ENCODE measurements at regions of chr14 and their contacts with region 1.

Region 1: DNA sequence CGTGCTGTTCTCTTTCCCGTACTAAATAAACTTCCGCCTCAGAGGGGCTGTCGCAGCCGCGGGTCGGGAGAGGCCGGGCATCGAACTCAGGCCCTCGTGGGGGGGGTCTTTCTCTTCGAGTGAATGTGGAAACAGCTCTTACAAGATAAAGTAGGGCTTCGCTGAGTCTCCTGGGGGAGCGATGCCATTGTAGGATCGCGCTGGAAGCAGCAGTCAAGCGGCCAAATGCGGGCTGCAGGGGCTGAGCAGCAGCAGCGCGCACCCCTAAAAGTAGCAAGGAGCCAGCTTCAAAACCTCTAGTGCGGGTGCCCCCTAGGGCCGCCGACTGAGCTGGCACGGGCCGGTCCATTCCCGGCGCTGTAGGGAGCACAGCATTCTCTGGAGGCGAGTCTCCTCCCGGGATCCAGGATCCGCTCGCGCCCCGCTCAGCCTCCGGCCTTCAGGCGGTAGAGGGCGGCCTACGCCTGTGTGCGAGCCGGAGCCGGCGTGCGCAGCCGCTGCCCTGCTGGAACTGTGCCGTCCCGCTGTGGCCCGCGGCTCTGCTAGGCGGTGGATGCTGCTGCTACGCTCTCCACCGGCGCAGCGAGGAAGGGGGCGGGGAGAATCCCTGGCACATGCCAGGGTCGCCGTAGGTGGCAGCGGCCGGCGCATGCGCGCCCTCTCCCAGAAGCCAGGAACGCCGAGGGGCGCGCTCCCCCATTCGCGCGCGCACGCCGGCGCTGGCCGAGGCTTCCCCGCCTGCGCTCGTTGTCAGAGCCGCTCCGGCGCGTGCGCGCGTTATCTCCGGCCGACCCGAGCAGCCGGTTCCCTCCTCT is at the start of gene FUT8:
- DNase-seq: peak; percentile 92 to 98 (median 96)
- H3K4me3 ChIP-seq: peak within 1 kb of the TSS; percentile 61
- H3K27ac ChIP-seq: peak within 1 kb of the TSS; percentile 79 to 85
- H3K4me1 ChIP-seq: peaks cover 1% of the 10 kb centered on the region
- H3K27me3 ChIP-seq: no peaks in the 10 kb centered on the region
- CTCF ChIP-seq: peak; percentile 30 to 50 (median 47)
- EP300 ChIP-seq: no peak
- POLR2A ChIP-seq: peak; percentile 31
- total RNA-seq, gene FUT8: 20.4 to 51.1 (median 34.0) TPM

Region 2: DNA sequence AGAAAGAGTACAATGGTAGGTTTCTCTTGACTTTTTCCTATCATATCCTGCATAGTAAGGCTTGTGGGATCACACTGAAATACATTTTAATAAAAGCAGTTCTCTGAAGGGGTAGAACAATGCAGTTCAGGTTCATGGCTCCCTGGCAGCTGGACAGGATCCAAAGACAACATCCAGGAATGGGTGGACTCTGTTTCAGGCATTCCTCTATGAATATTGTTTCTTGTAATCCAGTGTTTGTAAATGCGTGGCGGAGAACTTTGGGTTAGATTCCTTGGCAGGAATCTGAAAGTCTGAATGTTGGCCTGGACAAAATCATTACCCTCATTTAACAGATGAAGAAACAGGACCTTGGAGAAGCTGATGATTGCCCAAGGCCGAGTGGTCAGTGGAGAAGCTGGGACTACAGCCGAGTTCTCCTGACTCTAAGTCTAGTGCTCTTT is 1515.9 kb before region 1 on chr14:
- intact Hi-C with region 1: no loop called
- DNase-seq: peak in 4 of 5 donors; percentile 58 to 75 (median 67)
- H3K4me3 ChIP-seq: no peak overlapping the region
- H3K27ac ChIP-seq: peak overlapping the region in 1 of 2 donors; percentile 22
- H3K4me1 ChIP-seq: peaks cover 17% of the 10 kb centered on the region
- H3K27me3 ChIP-seq: no peaks in the 10 kb centered on the region
- CTCF ChIP-seq: no peak
- EP300 ChIP-seq: no peak
- POLR2A ChIP-seq: no peak

Region 3: DNA sequence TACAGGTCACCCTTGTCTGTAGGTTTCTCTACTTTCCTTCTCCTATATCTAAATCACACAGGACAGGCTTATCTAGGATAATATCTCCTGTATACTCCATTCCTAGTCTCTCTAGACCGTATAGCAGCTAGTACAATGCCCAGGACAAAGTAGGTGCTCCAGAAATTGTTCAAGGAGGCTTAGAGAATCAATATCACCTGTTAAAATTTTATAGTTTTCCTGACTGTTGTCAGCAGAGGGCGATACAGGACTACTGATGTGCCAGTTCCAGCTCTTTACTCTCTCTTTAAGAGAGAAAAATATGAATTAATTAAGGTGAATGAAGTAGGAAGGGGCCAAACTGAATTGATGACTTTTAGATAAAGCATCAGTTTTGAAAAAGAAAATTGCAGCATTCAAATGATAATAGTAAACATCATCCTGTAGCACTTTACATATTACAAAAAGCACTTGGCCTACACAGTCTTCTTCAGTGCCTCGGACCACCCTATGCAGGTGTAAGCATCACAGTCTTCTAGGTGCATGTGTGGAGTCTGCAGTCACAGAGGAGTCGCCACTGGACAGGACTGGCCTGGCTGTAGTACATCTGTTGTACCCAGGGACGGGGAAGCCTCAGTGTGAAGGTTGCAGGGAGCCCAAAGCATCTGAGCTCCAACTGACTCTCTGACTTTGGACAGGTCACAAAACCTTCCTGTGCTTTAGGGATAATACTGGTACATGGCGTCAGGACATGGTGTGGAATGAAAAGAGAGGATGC is 248.0 kb before region 1 on chr14:
- intact Hi-C with region 1: loop called in 1 of 4 experiments (anchors 10 kb)
- DNase-seq: no peak
- H3K4me3 ChIP-seq: no peak overlapping the region
- H3K27ac ChIP-seq: no peak overlapping the region
- H3K4me1 ChIP-seq: no peaks in the 10 kb centered on the region
- H3K27me3 ChIP-seq: no peaks in the 10 kb centered on the region
- CTCF ChIP-seq: peak; percentile 21 to 51 (median 44)
- EP300 ChIP-seq: no peak
- POLR2A ChIP-seq: no peak

Region 4: DNA sequence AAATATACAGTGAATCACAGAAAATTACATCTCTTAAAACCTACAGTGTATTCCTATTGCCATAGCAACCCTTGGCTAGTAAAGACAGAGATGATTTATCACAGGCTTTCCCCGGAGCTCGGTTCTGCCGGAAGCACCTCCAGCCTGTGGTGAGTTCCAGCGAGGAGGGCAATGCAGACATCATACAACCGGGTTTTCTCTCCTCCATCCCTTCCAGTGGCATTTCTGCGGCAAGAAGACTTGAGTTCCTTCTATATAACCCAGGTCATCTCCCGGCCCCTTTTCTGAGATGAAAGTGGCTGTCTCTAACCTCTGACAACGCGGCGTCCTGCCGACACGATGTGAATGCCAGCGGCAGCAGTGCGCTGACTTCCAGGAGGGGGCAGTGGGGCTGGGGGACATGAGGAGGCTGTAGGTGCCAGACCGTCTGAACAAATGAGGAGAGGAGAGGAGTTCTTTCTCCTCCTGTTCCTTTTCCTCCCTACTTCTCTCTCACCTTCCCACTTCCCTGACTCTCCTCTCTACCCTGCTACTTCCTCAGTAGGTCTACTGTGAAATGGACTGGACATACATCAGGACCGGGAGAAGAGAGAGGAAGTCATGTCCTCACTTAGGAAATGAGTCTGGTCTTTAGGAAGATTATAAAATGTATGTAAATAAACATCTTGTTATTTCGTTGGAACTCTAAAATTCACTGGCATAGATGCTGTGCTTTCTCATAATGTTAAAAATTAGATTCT is 241.3 kb before region 1 on chr14:
- intact Hi-C with region 1: loop called in 2 of 4 experiments (anchors 5 to 10 kb)
- DNase-seq: peak in 3 of 5 donors; percentile 13 to 47 (median 29)
- H3K4me3 ChIP-seq: no peak overlapping the region
- H3K27ac ChIP-seq: no peak overlapping the region
- H3K4me1 ChIP-seq: peaks cover 5% of the 10 kb centered on the region
- H3K27me3 ChIP-seq: no peaks in the 10 kb centered on the region
- CTCF ChIP-seq: no peak
- EP300 ChIP-seq: no peak
- POLR2A ChIP-seq: no peak

Measured in ovary (tissue), 10 donors.